ENCODE measurements at regions of chr1 and their contacts with region 1.

Region 1: DNA sequence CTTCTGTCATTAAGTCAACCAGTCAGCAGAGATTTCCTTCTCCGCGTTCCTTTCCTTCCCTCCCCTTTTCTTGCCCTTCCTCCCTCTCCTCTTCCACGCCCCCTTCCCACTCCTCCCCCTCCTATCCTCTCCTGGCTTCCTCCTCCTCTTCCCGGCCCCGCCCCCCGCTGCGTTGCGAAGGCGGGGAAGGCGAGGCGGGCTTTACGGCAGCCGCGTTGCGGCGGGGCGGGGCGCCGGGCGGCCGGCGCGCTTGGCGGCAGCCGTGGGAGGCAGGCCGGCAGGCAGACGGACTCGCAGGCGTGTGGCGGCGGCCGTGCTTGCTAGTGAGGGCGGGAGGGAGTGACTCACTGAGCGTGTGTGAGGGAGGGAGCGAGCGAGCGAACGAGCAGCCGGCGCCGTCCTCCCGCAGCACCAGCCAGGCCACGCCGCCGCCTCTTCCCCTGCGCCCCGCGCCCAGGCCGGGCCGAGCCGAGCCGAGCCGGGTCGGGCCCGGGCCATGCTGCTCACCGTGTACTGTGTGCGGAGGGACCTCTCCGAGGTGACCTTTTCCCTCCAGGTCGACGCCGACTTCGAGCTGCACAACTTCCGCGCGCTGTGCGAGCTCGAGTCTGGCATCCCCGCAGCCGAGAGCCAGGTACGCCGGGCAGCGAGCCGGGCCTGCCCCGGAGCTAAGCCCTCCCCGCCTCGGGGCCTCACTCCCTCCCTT is at the start of gene DDI2:
- DNase-seq: peak; percentile 98
- total RNA-seq, gene DDI2: 23.7 TPM

Region 2: DNA sequence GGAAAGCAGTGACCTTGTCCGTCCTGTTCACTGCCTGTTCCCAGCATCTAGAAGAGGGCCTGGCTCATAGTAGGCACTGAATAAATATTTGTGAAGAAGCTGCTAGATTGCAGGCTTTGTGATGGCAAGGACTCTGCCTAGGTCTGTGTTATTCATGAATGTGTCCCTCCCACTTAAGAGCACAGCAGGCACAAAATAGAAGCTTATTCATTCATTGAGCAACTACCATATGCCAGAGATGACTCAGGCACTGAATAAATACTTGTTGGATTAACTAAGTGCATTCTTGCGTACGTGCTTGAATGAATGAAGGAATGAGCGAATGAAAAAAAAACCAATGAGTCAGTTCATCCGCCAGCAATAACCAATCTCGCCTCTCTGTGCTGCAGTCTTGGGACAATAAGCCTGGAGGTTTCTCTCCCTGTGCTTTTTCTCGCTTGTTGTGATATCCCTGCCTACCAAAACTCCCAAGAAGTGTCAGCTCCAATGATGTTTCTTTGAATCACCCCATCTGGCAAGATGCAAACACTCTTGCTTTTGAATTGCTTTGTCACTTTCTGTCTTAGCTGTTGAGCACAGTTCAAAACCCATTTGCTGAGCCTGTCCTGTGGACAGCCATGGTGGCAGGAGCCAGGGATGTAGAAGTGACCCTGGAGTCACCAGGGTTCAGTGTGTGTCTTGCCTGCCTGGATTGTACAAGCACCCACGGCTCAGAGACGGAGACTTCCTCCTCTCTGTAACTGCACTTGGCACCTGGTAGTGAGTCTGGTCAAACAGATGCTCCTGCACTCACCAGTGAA is 874.9 kb before region 1 on chr1:
- intact Hi-C with region 1: no loop called
- DNase-seq: no peak

Region 3: DNA sequence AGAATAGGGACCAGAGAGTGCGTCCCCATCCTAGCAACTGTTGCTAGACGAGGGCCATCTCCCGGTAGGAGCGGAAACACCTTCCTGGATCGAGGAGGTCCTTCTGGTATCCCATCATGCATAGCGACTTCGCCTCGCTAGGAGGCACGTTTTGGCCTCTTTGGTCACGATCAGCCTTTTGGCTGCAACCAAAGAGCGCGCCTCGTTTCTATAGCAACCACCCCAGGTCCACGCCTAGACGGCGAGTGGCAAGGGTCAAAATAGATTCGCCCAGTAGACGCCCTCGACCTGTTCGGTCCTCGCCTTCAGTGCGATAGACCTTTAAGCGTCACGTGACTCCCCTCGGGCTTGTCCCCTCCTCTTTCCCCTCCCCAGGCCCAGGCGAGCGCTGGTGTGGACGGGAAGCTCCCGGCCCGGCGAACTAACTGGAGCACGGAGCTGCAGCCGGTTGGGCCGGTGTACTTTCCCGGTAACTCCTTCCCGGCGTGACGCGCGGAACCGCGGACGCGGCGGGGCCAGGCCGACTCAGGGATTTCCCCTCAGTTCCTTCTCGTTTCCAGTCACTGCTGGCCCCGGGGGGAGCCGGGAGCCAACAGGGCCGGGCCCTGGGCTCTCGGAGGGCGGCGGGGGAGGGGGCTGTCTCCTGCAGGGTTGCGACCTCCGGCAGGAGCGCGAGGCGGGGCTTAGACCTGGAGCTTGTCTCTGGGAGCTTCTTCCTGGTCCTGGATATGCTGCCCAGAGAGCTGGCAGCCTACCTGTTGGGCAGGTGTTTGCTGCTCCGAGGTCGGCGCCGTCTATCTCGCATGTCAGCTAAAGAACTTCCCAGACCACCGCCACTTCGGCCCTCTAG is 90.6 kb before region 1 on chr1 and contains the start of gene DNAJC16:
- intact Hi-C with region 1: loop called (anchors 5 kb)
- DNase-seq: peak; percentile 99
- total RNA-seq, gene DNAJC16: 11.0 TPM

Region 4: GRCh38 chr1:15603050-15603965 is 14.0 kb before region 1 on chr1:
- intact Hi-C with region 1: loop called (anchors 2 kb)
- DNase-seq: peak; percentile 99

Region 5: DNA sequence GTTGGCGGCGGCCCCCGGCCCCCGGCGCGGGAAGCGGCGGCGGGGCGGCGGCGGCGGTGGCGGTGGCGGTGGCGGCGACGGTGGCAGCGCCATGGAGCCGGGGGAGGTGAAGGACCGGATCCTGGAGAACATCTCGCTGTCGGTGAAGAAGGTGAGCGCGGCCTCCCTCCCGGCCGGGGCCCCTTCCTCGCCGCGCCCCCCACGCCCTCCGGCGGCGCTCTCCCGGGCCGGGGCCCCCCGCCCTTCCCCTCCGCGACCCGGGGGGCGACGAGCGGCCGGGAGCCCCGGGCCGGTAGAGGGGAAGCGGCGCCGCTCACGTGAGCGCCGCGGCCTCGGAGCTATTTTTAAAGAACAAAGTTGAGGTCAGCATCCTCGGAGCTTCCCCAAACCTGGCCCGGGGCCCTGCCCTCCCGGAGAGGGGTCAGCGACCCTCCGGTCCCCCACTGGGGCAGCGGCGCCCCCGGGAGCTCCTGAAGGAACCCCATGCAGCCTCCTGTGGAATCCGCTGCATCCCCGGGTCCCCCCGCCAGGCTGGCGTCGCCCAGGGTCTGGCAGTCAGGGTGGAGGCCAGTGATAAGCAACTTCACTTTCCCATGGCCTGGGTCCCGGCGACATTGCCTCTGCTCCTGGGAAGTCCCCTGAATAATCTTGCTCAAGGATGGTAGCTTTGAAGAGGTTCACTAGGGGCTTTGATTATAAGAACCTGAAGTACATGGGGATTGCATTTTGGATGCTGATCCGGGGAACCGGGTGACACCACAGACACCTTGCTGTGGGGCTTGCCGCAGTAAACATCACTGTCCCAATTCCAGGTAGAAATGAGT is 67.4 kb after region 1 on chr1:
- intact Hi-C with region 1: loop called (anchors 5 kb)
- DNase-seq: peak; percentile 79

Region 6: GRCh38 chr1:15703562-15703961 is 86.2 kb after region 1 on chr1:
- intact Hi-C with region 1: loop called (anchors 5 kb)
- DNase-seq: peak; percentile 90